ENCODE measurements at regions of chr7 and their contacts with region 1.

Region 1: GRCh38 chr7:31883761-31884164 is 186.4 kb downstream of the PDE1C start:
- DNase-seq: no peak
- ATAC-seq: no peak
- H3K4me3 ChIP-seq: no peak overlapping the region
- H3K27ac ChIP-seq: peak overlapping the region in 2 of 4 donors; percentile 42 to 64
- H3K4me1 ChIP-seq: peaks cover 6 to 17% of the 10 kb centered on the region in 2 donors
- H3K27me3 ChIP-seq: no peaks in the 10 kb centered on the region
- CTCF ChIP-seq: no peak
- POLR2A ChIP-seq: no peak

Region 2: DNA sequence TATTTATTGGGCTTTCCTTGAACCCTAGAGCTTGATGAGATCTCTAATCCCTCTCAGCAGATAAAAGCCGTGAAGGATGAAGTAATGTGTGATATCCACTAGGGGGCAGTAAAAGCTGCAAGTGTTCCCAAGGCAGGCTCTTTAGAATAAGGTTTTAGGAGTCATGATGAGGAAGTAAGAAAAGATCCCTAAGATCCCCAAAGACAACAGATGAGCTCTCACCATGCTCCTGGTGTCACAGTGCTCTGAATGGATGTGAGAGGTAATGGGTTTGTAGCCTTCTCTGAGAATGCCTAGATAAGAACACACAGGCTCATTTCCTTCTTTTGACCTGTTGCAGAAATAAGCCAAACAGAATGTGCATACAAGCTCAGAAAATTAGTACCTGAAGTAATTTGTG is 440.3 kb before region 1 on chr7:
- in situ Hi-C with region 1: no loop called
- intact Hi-C with region 1: no loop called
- DNase-seq: no peak
- ATAC-seq: peak in 1 of 2 donors; percentile 53
- H3K4me3 ChIP-seq: no peak overlapping the region
- H3K27ac ChIP-seq: no peak overlapping the region
- H3K4me1 ChIP-seq: no peaks in the 10 kb centered on the region
- H3K27me3 ChIP-seq: no peaks in the 10 kb centered on the region
- CTCF ChIP-seq: peak in 4 of 5 experiments; percentile 23 to 65 (median 52)
- POLR2A ChIP-seq: no peak

Region 3: DNA sequence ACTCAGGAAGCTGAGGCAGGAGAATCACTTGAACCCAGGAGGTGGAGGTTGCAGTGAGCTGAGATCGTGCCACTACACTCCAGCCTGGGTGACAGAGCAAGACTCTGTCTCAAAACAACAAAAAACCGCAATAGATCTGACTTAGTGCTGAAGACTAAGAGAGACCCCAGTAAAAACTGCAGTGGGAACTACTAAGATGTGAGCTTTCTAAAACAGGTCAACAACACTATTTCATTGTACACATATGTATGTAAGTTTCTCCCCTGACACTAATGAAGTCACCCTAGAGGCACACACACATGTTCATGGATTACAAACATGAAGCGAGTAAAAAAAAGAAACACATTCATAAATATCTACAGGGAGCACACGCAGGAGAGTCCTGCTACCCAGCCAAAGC is 118.2 kb after region 1 on chr7:
- in situ Hi-C with region 1: no loop called
- intact Hi-C with region 1: no loop called
- DNase-seq: no peak
- ATAC-seq: no peak
- H3K4me3 ChIP-seq: no peak overlapping the region
- H3K27ac ChIP-seq: no peak overlapping the region
- H3K4me1 ChIP-seq: no peaks in the 10 kb centered on the region
- H3K27me3 ChIP-seq: no peaks in the 10 kb centered on the region
- CTCF ChIP-seq: no peak
- POLR2A ChIP-seq: no peak

Region 4: GRCh38 chr7:32070406-32071360 is 186.9 kb after region 1 on chr7 and contains the start of gene PDE1C:
- in situ Hi-C with region 1: no loop called
- intact Hi-C with region 1: loop called (anchors 10 kb)
- DNase-seq: no peak
- ATAC-seq: no peak
- H3K4me3 ChIP-seq: peak within 1 kb of the TSS; percentile 21 to 45 (median 35)
- H3K27ac ChIP-seq: peak within 1 kb of the TSS in 1 of 4 donors; percentile 40
- H3K4me1 ChIP-seq: no peaks in the 10 kb centered on the region
- H3K27me3 ChIP-seq: peaks cover 9 to 24% (median 17%) of the 10 kb centered on the region in 3 donors
- CTCF ChIP-seq: no peak
- POLR2A ChIP-seq: no peak
- total RNA-seq, gene PDE1C: 0.46 to 1.2 (median 0.67) TPM

Region 5: DNA sequence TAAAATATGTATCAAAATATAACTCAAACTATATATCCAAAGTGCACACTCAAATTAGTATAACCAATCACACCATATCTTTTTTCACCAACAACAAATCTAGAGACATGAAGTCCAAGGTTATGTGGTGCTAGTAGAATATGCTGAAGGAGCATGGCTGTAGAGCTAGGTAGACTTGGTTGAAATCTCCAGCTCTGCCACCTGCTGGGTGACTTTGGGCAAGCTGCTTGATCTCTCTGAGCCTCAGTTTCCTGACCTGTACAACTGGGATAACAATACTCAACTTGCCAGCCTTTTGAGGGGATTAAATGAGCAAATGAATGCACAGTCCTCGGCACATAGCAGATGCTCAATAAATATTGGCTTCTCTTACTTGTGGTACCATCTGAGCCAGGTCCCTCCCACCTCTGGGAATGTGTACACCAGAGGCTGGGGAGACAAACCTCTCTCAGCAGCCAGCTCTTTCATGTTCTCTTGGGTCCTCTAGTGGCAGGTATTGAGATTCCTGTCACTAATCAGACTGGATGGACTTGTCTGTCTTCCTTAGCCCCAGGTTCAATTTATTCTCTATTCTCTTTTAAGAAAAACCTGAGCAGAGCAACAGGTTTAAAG is 280.7 kb after region 1 on chr7:
- in situ Hi-C with region 1: no loop called
- intact Hi-C with region 1: loop called (anchors 5 kb)
- DNase-seq: no peak
- ATAC-seq: no peak
- H3K4me3 ChIP-seq: no peak overlapping the region
- H3K27ac ChIP-seq: no peak overlapping the region
- H3K4me1 ChIP-seq: peaks cover 5 to 10% of the 10 kb centered on the region in 2 donors
- H3K27me3 ChIP-seq: no peaks in the 10 kb centered on the region
- CTCF ChIP-seq: peak in 1 of 5 experiments; percentile 25
- POLR2A ChIP-seq: no peak

Measured in gastrocnemius medialis (tissue), 4 donors.